ENCODE measurements at regions of chr2 and their contacts with region 1.

Region 1: GRCh38 chr2:85243101-85244072 is 84.4 kb downstream of the TGOLN2 start:
- DNase-seq: no peak
- H3K4me3 ChIP-seq: no peak overlapping the region
- H3K27ac ChIP-seq: no peak overlapping the region
- H3K4me1 ChIP-seq: peaks cover 6% of the 10 kb centered on the region
- H3K27me3 ChIP-seq: no peaks in the 10 kb centered on the region
- CTCF ChIP-seq: no peak; the same call in 1 of the 2 replicates

Region 2: GRCh38 chr2:85096616-85097015 is 146.8 kb before region 1 on chr2:
- CTCF ChIA-PET with region 1: no interaction called
- POLR2A ChIA-PET with region 1: interaction called, 14 read pairs
- intact Hi-C with region 1: no loop called
- DNase-seq: peak in 1 of 2 experiments; percentile 69
- H3K4me3 ChIP-seq: no peak overlapping the region
- H3K27ac ChIP-seq: no peak overlapping the region
- H3K4me1 ChIP-seq: peaks cover 18% of the 10 kb centered on the region
- H3K27me3 ChIP-seq: no peaks in the 10 kb centered on the region
- CTCF ChIP-seq: no peak